Calu3 (cell line): ENCODE measurements at regions of chr17 and their contacts with region 1.

Region 1: DNA sequence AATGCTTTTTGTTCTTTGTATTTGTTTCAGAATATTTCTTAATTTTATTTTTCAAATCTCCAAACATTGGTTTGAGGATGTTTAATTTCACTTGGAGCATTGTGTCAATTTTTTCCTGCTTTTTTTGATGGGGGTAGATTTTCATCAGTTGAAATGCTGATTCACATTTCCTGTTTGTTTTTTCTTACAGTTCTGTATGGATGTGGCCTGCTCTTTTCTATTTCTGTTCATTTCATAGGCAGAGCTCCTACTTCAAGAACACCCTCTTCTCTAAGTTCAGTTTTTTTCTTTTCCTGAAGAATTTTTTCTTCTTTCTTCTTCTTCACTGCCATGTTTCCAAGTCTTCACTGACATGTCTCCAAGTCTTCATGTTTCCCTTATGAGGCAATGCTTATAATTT is 8.8 kb downstream of the MBTD1 start:
- DNase-seq: no peak
- H3K4me3 Mint-ChIP-seq: no peak overlapping the region
- H3K27ac Mint-ChIP-seq: no peak overlapping the region
- H3K4me1 Mint-ChIP-seq: peaks cover 40% of the 10 kb centered on the region
- H3K27me3 Mint-ChIP-seq: no peaks in the 10 kb centered on the region
- CTCF ChIP-seq: no peak

Region 2: DNA sequence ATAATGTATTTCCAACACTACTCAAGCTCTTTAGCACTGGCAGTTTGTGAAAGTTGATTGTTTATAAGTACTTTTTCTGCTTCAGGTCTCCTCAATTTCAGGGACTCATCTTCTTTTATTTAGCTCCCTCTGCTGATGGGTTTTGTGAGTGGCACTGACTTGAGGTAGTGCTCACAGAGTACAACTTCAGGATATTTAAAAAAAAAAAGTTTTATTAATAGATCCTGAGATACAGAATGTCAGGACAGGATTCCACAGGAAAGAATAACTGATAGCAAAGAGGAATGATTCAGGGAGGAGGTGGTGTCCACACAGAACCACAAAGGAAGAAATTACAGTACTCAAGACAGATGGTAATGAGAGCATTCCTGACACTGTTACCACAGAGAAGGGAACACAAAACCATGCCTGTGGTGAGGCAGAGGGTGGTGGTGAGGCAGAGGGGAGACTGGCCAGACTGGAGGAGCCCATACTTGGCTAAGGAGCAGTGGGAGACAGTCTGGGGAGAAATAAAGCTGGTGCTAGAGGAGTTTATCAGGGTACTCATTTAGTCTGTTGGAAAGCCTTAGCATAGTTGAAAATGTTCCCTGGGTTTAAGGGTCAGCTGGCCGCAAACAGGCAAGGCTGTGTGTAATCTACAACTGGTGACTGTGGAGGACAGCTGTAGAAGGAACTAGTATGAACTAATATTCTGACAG is 194.0 kb before region 1 on chr17:
- CTCF ChIA-PET with region 1: no interaction called
- intact Hi-C with region 1: no loop called
- DNase-seq: peak; percentile 60
- H3K4me3 Mint-ChIP-seq: no peak overlapping the region
- H3K27ac Mint-ChIP-seq: peak overlapping the region; percentile 48
- H3K4me1 Mint-ChIP-seq: peaks cover 27% of the 10 kb centered on the region
- H3K27me3 Mint-ChIP-seq: no peaks in the 10 kb centered on the region
- CTCF ChIP-seq: peak; percentile 65

Region 3: GRCh38 chr17:51231999-51232398 is 19.0 kb before region 1 on chr17:
- CTCF ChIA-PET with region 1: interaction called, 5 read pairs
- intact Hi-C with region 1: loop called (anchors 1 kb)
- DNase-seq: peak; percentile 58
- H3K4me3 Mint-ChIP-seq: peak overlapping the region; percentile 61
- H3K27ac Mint-ChIP-seq: peak overlapping the region; percentile 22
- H3K4me1 Mint-ChIP-seq: peaks cover 38% of the 10 kb centered on the region
- H3K27me3 Mint-ChIP-seq: no peaks in the 10 kb centered on the region
- CTCF ChIP-seq: no peak